ENCODE measurements at regions of chr15 and their contacts with region 1.

Region 1: DNA sequence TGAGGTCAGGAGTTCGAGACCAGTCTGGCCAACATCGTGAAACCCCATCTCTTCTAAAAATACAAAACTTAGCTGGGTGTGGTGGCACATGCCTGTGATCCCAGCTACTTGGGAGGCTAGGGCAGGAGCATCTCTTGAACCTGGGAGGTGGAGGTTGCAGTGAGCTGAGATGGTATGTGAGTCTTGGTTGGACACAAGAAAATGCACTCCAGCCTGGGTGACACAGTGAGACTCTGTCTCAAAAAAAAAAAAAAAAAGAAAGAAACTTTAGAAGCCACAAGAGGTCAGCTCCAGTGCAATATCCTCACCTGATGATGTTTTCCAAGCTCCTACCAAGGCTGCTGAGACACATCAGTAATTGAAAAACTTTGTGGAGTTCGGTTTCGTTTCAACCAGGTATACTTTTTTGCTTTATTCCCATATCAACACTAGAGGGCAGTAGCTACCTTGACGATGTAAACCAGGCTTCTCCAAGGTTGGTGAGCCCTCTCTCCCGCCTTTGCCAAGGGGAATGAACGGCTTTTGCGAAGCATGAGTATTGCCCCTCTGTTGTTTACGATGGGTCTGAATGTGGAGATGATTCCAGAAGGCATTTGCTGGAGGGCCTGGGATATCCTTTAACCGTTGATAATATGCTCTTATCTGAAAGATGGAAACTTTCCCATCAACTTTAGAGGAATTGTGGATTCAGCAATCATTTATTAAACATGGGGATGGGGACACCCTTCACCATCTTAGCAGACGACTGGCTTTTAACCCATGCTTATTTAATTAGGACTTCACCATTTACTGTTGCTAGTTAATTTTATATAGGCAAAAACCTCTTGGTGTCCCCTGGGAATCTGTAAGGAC is 202.8 kb downstream of the SV2B start:
- DNase-seq: peak in 1 of 2 donors; percentile 48
- ATAC-seq: peak; percentile 76 to 91 (median 80)
- H3K4me3 ChIP-seq: no peak overlapping the region
- H3K27ac ChIP-seq: no peak overlapping the region
- H3K4me1 ChIP-seq: peaks cover 0 to 24% (median 9%) of the 10 kb centered on the region in 9 donors
- H3K27me3 ChIP-seq: peaks cover 0 to 18% (median 7%) of the 10 kb centered on the region in 7 donors
- CTCF ChIP-seq: peak; percentile 44 to 83 (median 74)

Region 2: DNA sequence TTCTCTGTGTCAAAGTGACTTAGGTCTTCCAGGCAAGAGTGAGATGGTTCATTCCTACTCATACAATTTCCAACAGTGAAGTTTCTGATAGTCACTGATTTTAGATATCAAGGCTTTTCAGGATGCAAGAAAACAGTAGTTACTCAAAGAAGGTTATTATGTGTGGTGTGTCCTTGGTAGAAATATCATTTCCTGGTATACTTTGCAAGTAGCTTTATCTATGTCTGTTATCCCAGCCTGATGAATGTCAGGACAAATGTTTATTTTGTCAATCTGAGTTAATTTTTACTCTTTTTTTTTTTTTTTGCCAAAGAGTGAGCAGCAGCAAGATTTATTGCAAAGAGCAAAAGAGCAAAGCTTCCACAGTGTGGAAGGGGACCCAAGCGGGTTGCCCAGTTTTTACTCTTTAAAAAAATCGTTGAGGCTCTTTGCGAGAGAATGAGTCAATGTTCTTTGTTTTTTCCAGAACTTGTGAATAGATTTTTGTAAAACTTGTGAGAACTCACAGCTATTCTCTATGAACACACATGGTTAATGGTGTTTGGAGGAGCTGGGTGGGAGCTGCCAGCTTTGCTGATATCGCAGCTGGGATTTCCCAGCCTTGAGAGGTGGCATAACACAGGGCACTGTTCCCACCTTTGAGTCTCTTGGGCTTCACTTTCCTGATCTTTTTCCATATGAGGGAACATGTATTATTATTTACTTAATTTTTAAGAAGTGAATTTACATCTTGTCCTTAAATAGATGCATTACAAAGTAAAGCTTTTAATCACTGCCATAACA is 150.8 kb before region 1 on chr15:
- intact Hi-C with region 1: no loop called
- DNase-seq: no peak
- ATAC-seq: no peak
- H3K4me3 ChIP-seq: no peak overlapping the region
- H3K27ac ChIP-seq: no peak overlapping the region
- H3K4me1 ChIP-seq: peaks cover 0 to 6% (median 0%) of the 10 kb centered on the region in 9 donors
- H3K27me3 ChIP-seq: peaks cover 0 to 13% (median 0%) of the 10 kb centered on the region in 7 donors
- CTCF ChIP-seq: no peak

Region 3: DNA sequence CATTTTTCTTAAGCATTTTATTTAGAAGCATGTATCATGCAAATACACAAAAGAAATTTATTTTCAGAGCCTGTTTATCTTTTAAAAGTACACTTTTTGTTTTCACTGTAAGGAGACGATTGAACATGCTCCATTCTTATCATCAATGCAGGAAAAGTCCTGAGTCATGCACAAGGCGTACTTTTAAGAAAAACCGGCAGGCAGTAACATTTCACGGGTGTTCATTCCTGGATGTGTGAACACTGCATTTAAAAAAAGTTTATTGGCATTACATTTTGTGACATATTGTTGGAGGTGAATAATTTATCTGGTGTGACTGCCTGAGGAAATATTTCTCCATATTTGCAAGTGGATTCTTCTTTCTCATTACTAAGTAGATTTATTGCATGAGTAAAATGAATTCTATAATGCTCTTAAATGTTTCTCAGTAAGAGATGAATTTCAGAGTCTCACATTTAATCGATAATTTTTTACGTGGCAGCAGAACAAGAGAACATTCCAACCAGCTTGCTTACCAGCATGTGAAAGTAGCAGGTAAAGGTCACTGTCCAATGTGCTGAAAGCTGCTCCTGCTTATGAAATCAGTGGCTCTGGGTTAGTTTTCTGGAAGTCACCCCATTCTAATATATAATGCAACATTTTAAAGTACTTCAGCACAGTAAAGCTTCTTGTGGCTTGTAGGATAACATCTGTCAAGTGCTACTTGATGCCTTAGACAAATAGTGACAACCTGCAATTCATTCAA is 115.7 kb before region 1 on chr15:
- intact Hi-C with region 1: no loop called
- DNase-seq: no peak
- ATAC-seq: no peak
- H3K4me3 ChIP-seq: no peak overlapping the region
- H3K27ac ChIP-seq: no peak overlapping the region
- H3K4me1 ChIP-seq: no peaks in the 10 kb centered on the region
- H3K27me3 ChIP-seq: peaks cover 0 to 16% (median 0%) of the 10 kb centered on the region in 7 donors
- CTCF ChIP-seq: no peak

Region 4: GRCh38 chr15:91515188-91515754 is 212.5 kb after region 1 on chr15:
- intact Hi-C with region 1: loop called in 6 of 10 experiments (anchors 5 to 10 kb)
- DNase-seq: peak; percentile 36 to 44
- ATAC-seq: peak in 7 of 8 donors; percentile 72 to 95 (median 84)
- H3K4me3 ChIP-seq: no peak overlapping the region
- H3K27ac ChIP-seq: peak overlapping the region in 6 of 10 donors; percentile 23 to 65 (median 30)
- H3K4me1 ChIP-seq: peaks cover 0 to 20% (median 0%) of the 10 kb centered on the region in 9 donors
- H3K27me3 ChIP-seq: no peaks in the 10 kb centered on the region
- CTCF ChIP-seq: no peak

Region 5: GRCh38 chr15:91522663-91523332 is 220.0 kb after region 1 on chr15:
- intact Hi-C with region 1: loop called (anchors 1 to 10 kb)
- DNase-seq: peak in 1 of 2 donors; percentile 14
- ATAC-seq: peak in 5 of 8 donors; percentile 42 to 75 (median 71)
- H3K4me3 ChIP-seq: no peak overlapping the region
- H3K27ac ChIP-seq: no peak overlapping the region
- H3K4me1 ChIP-seq: peaks cover 0 to 14% (median 0%) of the 10 kb centered on the region in 9 donors
- H3K27me3 ChIP-seq: no peaks in the 10 kb centered on the region
- CTCF ChIP-seq: peak in 8 of 9 donors; percentile 12 to 66 (median 54)

Region 6: GRCh38 chr15:91529534-91529933 is 226.7 kb after region 1 on chr15:
- intact Hi-C with region 1: loop called in 5 of 10 experiments (anchors 5 to 10 kb)
- DNase-seq: no peak
- ATAC-seq: no peak
- H3K4me3 ChIP-seq: no peak overlapping the region
- H3K27ac ChIP-seq: no peak overlapping the region
- H3K4me1 ChIP-seq: peaks cover 0 to 24% (median 0%) of the 10 kb centered on the region in 9 donors
- H3K27me3 ChIP-seq: no peaks in the 10 kb centered on the region
- CTCF ChIP-seq: no peak

Region 7: DNA sequence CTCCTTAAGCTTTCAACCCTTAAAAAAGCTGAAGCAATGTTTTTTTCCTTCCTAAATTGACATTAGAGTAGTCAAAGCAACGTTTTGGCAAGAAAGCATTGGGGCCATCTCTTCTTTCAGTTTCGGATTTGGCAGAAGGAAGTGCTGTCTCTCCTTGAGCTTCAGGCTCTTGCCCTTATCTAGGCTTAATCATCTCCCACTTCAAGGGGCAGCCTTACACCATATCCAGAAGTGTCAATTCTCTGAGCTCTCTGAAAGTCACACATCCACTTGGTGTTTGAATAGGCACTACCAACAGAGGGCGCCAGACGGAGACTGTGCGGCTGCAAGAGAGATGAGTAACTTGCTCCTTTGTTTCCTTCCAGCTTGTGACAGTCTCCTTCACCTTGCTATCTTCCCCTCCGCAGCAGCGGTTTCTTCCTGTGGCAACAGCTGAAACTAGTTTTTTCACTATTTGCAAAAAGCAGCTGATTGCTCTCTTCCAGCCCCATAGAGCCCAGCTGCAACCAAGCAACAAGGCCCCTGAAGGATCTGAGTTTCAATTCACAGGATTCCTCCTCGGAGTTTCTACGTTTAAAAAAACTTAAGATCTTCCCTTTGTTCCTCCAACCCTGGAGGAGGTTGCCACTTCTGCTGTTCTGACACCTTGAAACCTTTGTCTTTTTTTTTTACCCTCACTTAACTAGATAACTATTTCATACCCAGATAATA is 403.7 kb after region 1 on chr15:
- intact Hi-C with region 1: loop called in 6 of 10 experiments (anchors 5 to 10 kb)
- DNase-seq: peak; percentile 62 to 82
- ATAC-seq: peak; percentile 78 to 90 (median 84)
- H3K4me3 ChIP-seq: peak overlapping the region in 1 of 10 donors; percentile 3
- H3K27ac ChIP-seq: peak overlapping the region in 5 of 10 donors; percentile 8 to 79 (median 32)
- H3K4me1 ChIP-seq: peaks cover 0 to 23% (median 6%) of the 10 kb centered on the region in 9 donors
- H3K27me3 ChIP-seq: no peaks in the 10 kb centered on the region
- CTCF ChIP-seq: peak; percentile 77 to 95 (median 93)

Region 8: GRCh38 chr15:91813924-91814323 is 511.1 kb after region 1 on chr15:
- intact Hi-C with region 1: no loop called
- DNase-seq: no peak
- ATAC-seq: no peak
- H3K4me3 ChIP-seq: no peak overlapping the region
- H3K27ac ChIP-seq: no peak overlapping the region
- H3K4me1 ChIP-seq: no peaks in the 10 kb centered on the region
- H3K27me3 ChIP-seq: no peaks in the 10 kb centered on the region
- CTCF ChIP-seq: no peak

Region 9: DNA sequence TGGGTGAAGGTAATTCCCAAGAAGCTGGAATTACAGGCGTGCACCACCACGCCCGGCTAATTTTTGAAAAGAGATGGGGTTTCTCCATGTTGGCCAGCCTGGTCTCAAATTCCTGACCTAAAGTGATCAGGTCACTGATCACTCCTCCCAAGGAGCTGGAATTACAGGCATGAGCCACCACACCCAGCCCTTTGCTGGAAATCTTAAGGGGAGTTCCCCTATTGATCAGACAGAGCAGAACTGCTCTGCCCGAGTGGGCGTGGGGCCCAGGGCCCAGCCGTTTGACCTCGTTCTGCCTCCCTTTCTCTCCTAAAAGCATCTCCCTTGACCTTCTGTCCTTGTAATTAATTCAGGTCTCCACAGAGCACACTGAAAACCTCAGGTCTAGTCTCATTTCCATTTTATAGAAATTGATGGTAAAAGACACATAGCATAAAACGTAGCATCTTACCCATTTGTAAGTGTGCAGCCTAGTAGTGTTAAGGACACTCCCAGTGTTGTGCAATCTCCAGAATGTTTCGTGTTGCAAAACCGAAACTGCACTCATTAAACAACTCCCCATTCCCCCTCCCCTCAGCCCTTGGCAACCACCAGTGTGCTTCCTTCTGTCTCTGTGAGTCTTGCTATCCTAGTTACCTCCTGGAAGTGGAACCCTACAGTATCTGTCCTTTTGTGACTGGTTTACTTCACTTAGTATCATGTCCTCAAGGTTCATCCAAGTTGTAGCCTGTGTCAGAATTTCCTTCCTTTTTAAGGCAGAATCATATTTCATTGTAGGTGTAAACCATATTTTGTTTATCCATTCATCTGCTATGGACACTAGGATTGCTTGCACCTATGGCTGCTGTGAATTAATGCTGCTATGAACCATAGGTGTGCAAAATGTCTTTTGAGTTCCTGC is 640.1 kb after region 1 on chr15:
- intact Hi-C with region 1: loop called in 2 of 10 experiments (anchors 10 kb)
- DNase-seq: peak; percentile 63 to 88
- ATAC-seq: peak; percentile 75 to 92 (median 86)
- H3K4me3 ChIP-seq: peak overlapping the region in 7 of 10 donors; percentile 6 to 35 (median 17)
- H3K27ac ChIP-seq: peak overlapping the region in 9 of 10 donors; percentile 29 to 82 (median 68)
- H3K4me1 ChIP-seq: peaks cover 37 to 98% (median 93%) of the 10 kb centered on the region in 9 donors
- H3K27me3 ChIP-seq: no peaks in the 10 kb centered on the region
- CTCF ChIP-seq: no peak

Measured in heart right ventricle (tissue), 16 donors.